Dorsolateral prefrontal cortex (tissue), 120 donors: ENCODE measurements at regions of chr15 and their contacts with region 1.

Region 1: DNA sequence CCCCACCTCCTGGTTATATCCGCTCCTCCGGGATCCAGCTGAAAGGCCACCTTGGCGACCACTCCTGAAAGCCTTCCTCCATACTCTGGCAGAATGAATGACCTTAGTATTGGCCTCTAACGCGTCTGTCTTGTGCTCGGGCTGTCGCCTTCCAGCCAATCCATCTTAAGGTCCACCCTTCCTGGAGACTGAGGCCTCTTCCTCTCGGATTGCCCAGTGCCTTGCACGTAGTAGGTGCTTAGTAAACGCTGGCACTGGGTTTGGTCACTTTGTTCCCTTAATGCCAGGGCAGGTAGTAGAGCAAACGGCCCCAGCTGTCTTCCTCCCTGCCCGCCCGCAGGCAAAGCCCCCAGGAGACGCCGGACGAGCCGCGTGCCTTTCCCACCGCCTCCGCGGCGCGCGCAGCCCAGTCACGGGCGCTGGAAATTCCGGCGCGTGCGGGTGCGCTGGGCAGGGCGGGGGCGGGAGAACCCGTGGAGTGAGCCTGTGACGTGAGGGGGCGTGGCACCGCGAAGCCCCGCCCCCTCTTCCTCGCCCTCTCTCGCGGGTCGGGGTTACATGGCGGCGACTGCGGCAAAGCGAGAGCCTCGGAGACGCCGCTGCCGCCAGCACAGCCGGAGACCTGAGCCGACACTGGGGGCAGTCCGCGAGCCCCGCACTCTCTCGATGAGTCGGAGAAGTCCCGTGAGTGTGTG is at the start of gene MAPK6:
- DNase-seq: peak; percentile 85 to 93 (median 91)
- H3K4me3 ChIP-seq: peak within 1 kb of the TSS; percentile 59 to 90 (median 79)
- H3K27ac ChIP-seq: peak within 1 kb of the TSS; percentile 93 to 99 (median 98)
- H3K27me3 ChIP-seq: no peaks in the 10 kb centered on the region
- CTCF ChIP-seq: peak in 19 of 56 donors; percentile 8 to 47 (median 20)
- total RNA-seq, gene MAPK6: 35.9 to 84.3 (median 57.8) TPM

Region 2: DNA sequence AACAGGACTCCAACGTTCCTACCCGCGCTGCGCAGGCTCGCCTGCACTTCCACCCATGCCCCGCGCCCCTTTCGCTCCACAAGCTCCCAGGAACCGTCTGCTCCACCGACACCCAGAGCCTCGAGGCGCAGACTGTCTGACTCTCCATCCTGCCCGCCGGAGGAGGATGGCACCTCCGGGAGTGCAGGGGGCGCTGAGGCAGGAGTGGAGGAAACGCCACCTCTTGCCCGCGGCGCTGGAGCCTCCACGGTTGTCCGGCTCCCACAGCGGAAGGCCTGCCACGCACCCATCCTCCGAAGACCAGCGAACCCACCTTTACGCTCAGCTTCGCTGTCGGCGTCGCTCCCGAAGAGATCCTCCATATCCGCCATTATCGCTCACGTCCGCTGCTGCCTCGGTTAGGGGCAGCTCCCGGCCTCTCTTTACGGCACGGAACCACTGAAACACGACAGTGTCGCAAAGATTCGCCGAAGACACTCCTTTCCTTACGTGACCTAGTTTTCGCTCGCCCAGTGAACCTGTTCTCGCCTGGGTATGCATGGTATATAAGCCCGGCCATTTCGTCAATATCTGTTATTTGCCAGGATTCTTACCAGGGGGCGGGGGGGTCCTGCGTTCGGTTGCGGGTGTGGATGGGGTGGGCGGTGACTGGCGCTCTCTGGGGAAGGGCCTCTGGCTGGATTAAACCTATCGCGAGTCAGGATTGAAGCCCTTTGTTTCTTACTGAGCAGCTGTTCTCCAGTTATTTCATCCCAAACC is 47.3 kb before region 1 on chr15 and contains the start of gene LEO1:
- intact Hi-C with region 1: loop called (anchors 2 to 5 kb)
- DNase-seq: peak; percentile 86 to 95 (median 92)
- H3K4me3 ChIP-seq: peak within 1 kb of the TSS; percentile 57 to 99 (median 91)
- H3K27ac ChIP-seq: peak within 1 kb of the TSS; percentile 58 to 98 (median 94)
- H3K27me3 ChIP-seq: no peaks in the 10 kb centered on the region
- CTCF ChIP-seq: peak in 55 of 56 donors; percentile 16 to 73 (median 55)
- total RNA-seq, gene LEO1: 14.3 to 35.5 (median 23.9) TPM

Region 3: DNA sequence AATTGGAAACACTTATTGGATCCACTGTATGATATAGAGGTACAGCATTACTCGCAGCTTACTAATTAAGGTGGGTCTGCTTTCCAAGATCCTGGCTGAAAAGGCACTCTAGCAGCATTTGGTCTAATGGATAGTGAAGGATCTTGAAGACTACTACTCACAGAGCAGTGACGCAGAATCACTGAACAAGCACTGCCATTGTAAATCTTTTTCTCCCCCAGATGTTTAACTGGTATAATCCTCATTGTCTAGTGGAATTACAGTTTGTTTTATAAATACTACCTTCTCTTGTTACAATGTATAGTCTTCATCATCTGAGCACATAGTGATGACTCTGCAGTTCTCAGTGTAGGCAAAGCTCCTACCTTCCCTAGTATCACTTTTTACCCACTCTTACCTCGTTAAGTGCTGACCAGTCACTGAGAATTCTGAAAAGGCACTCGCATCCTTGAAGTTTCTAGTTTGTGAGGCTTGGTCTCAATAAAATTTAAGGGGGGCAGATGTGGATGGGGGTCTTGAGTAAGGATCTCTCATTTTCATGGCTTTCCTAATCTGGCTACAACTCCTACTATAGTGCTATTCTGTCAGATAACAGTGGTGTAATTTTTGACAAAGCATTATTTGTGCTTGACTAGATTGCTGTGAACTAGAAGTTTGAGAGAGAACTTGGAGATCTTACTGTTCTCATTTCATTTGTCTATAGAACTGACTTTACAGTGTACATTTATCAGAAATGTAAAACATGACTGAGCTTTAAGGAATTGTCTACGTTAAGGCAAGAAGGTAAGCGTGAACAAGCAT is 23.4 kb after region 1 on chr15:
- intact Hi-C with region 1: loop called in 1 of 2 experiments (anchors 2 kb)
- DNase-seq: no peak
- H3K4me3 ChIP-seq: peak overlapping the region in 6 of 59 donors; percentile 1 to 31 (median 10)
- H3K27ac ChIP-seq: peak overlapping the region in 56 of 59 donors; percentile 29 to 88 (median 70)
- H3K27me3 ChIP-seq: no peaks in the 10 kb centered on the region
- CTCF ChIP-seq: no peak

Region 4: DNA sequence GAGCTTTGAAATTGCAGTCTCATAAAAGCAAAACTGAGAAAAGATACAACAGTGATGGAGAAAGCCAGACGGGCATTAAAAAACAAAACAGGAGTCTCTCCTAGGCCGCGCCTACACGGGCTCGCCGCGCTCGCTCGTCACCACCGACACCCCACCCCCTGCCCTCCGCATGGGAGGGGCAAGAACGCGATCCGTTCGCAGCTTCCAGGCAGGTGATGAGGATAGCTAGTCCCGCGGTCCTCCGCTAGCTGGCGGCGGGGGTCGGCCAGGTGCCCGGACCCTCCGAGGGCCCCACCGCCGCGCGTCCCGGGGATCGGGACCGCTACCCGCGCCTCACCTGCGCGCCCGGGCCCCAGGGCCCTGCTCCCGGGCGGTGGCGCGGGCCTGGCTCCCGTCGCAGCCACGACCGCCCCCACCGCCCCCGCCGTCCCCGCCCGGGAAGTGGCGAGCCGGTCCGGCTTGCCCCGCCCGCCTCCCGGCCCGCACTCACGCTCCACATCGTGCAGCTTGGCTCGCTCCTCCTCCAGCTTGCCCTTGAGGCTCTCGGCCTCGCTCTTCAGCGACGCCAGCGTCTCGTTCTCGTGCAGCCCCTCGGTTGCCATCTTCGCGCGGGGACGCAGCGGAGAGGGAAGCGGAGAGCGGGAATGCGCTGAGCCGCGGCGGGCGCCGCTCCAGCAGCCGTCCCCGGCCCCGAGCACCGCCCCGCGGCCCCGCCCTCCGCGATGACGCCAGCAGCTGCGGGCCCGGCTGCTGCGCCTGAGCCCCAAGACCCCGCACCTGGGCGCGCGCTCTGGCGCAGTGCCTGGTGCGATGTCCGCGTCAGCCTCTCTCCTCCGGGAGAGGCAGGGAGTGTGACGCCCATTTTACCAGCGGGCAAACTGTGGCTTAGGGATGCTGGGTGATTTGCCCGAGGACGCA is 160.7 kb after region 1 on chr15:
- intact Hi-C with region 1: loop called in 1 of 2 experiments (anchors 5 kb)
- DNase-seq: peak; percentile 52 to 92 (median 80)
- H3K4me3 ChIP-seq: peak overlapping the region; percentile 55 to 98 (median 81)
- H3K27ac ChIP-seq: peak overlapping the region in 58 of 59 donors; percentile 31 to 96 (median 86)
- H3K27me3 ChIP-seq: no peaks in the 10 kb centered on the region
- CTCF ChIP-seq: peak in 2 of 56 donors; percentile 1 to 7